B cell (primary cell): ENCODE measurements at regions of chr4 and their contacts with region 1.

Region 1: DNA sequence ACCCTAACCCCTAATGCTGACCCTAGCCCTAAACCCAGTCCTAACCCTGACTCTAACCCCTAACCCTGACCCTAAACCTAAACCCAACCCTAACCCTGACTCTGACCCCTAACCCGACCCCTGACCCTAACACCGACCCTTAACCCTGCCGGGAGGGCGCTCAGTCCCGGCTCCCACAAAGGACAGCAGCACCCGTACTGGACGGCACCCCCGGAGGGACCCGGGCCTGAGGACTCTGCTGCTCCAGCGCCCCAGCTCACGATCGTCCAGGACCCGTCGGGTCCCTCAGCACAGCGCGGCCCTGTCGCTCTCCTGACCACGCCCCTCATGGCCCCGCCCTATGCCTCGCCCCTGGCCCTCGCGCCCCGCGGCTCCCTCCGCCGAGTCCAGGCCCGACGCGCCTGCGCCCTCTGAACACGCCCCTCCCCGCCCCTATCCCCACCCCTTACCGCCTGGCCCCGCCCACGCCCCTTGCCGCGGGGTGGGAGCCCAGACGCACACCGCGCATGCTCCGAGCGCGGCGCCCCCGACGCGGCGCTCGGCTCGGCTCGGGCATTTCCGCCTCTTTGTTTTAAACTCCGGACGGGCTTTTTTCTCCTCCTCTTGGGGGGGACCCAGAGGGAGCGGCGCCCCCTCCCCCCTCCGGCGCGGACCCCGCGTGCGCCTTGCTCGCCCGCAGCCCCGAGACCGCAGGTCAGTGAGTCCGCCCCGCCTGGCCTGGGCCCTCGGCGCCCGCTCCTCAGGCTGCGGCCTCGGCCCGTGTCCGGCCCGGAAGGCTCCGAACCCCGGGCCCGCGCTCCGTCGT is at the start of gene PCGF3:
- DNase-seq: peak; percentile 94
- ATAC-seq: peak; percentile 98
- H3K4me3 ChIP-seq: peak within 1 kb of the TSS; percentile 42 to 90 (median 79)
- H3K4me3 Mint-ChIP-seq: peak within 1 kb of the TSS; percentile 90
- H3K27ac ChIP-seq: peak within 1 kb of the TSS; percentile 63 to 91
- H3K27ac Mint-ChIP-seq: peak within 1 kb of the TSS; percentile 93
- H3K4me1 ChIP-seq: peaks cover 17 to 30% of the 10 kb centered on the region in 2 donors
- H3K4me1 Mint-ChIP-seq: peaks cover 30% of the 10 kb centered on the region
- H3K27me3 ChIP-seq: no peaks in the 10 kb centered on the region
- H3K27me3 Mint-ChIP-seq: no peaks in the 10 kb centered on the region
- CTCF ChIP-seq: no peak
- total RNA-seq, gene PCGF3: 83.4 and 90.3 TPM in 2 replicates

Region 2: DNA sequence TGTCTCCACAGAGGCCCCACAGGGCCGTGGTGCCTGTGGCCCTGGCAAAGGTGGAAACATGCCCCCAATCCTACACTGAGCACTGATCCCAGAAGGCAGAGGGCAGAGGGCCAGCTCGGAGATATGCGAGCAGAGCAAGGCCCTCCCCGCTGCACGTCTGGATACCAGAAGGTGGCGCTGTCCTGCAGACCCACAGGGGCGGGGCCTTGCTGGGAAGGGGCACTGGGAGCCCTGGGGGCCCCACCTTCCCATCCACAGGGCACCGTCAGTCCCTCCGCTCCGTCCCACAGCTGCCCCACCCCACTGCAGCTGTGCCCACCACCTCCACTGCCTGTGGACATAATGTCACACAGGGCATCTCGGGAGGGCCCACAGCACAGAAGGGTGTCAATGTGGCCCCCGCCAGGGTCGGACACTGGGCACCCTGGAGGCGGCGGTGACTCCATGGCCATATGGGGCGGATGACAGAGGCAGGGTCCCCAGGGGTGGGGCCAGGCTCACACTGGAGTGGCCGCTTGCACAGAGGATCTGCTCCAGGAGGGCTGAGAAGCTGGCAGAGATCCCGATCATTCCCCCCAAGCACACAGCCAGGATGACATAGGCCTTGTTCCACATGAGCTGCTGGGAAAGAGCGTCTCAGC is 21.4 kb before region 1 on chr4:
- CTCF ChIA-PET with region 1: interaction called, 13 read pairs
- POLR2A ChIA-PET with region 1: interaction called, 3 read pairs
- intact Hi-C with region 1: loop called (anchors 1 kb)
- DNase-seq: peak; percentile 57
- ATAC-seq: no peak
- H3K4me3 ChIP-seq: no peak overlapping the region
- H3K4me3 Mint-ChIP-seq: no peak overlapping the region
- H3K27ac ChIP-seq: no peak overlapping the region
- H3K27ac Mint-ChIP-seq: no peak overlapping the region
- H3K4me1 ChIP-seq: peaks cover 20 to 27% of the 10 kb centered on the region in 2 donors
- H3K4me1 Mint-ChIP-seq: peaks cover 20% of the 10 kb centered on the region
- H3K27me3 ChIP-seq: peaks cover 0 to 17% (median 1%) of the 10 kb centered on the region in 4 experiments
- H3K27me3 Mint-ChIP-seq: peaks cover 13% of the 10 kb centered on the region
- CTCF ChIP-seq: peak; percentile 47

Region 3: GRCh38 chr4:781493-782216 is 76.2 kb after region 1 on chr4:
- CTCF ChIA-PET with region 1: no interaction called
- POLR2A ChIA-PET with region 1: no interaction called
- intact Hi-C with region 1: loop called (anchors 1 kb)
- DNase-seq: peak; percentile 99
- ATAC-seq: peak; percentile 94
- H3K4me3 ChIP-seq: peak overlapping the region; percentile 23 to 97 (median 85)
- H3K4me3 Mint-ChIP-seq: peak overlapping the region; percentile 94
- H3K27ac ChIP-seq: peak overlapping the region; percentile 82 to 95
- H3K27ac Mint-ChIP-seq: peak overlapping the region; percentile 91
- H3K4me1 ChIP-seq: peaks cover 38 to 40% of the 10 kb centered on the region in 2 donors
- H3K4me1 Mint-ChIP-seq: peaks cover 48% of the 10 kb centered on the region
- H3K27me3 ChIP-seq: peaks cover 0 to 26% (median 11%) of the 10 kb centered on the region in 4 experiments
- H3K27me3 Mint-ChIP-seq: peaks cover 18% of the 10 kb centered on the region
- CTCF ChIP-seq: no peak